Activated CD4-positive, alpha-beta T cell treated with anti-CD3 and anti-CD28 coated beads, Interleukin-2, amount 10 ng/mL, durations not matched to agents 24 days and 14 days (primary cell): ENCODE measurements at regions of chr17 and their contacts with region 1.

Region 1: GRCh38 chr17:28071891-28072606 is 29.6 kb downstream of the NLK start:
- DNase-seq: no peak
- H3K4me3 Mint-ChIP-seq: no peak overlapping the region
- H3K27ac Mint-ChIP-seq: peak overlapping the region; percentile 39
- H3K4me1 Mint-ChIP-seq: peaks cover 35% of the 10 kb centered on the region
- H3K27me3 Mint-ChIP-seq: no peaks in the 10 kb centered on the region

Region 2: DNA sequence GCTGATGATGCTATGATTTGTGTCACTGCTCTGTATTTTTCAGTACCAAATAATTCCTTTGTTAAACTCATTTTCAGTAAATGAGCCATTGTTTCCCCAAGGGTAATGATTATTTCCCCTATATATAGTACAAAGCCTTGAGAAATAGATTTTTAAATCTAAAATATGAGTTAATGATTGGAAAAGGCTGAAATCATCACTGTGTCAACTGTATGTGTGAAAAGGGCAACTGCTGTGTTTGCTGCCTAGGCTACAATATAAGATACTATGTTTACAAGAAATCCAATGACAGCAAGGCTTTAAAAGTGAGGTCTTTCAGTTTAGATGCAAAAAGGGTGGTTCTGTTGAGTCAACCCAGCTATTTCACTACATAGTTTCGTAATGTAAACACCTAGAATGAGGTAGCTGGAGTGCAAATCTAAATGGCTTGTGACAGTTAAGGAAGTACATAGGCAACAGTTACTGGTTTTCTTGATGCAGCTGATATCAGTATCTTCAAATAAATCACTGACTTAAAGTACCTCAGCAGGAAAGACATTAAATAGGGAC is 14.2 kb before region 1 on chr17:
- intact Hi-C with region 1: loop called (anchors 2 kb)
- DNase-seq: no peak
- H3K4me3 Mint-ChIP-seq: no peak overlapping the region
- H3K27ac Mint-ChIP-seq: peak overlapping the region; percentile 72
- H3K4me1 Mint-ChIP-seq: peaks cover 24% of the 10 kb centered on the region
- H3K27me3 Mint-ChIP-seq: no peaks in the 10 kb centered on the region

Region 3: GRCh38 chr17:28174352-28174964 is 102.4 kb after region 1 on chr17:
- intact Hi-C with region 1: loop called (anchors 10 kb)
- DNase-seq: peak; percentile 79
- H3K4me3 Mint-ChIP-seq: peak overlapping the region; percentile 36
- H3K27ac Mint-ChIP-seq: no peak overlapping the region
- H3K4me1 Mint-ChIP-seq: peaks cover 24% of the 10 kb centered on the region
- H3K27me3 Mint-ChIP-seq: no peaks in the 10 kb centered on the region